Activated naive CD8-positive, alpha-beta T cell treated with anti-CD3 and anti-CD28 coated beads, Interleukin-2, amount 10 ng/mL, durations not matched to agents 7 days and 5 days (primary cell): ENCODE measurements at regions of chr4 and their contacts with region 1.

Region 1: DNA sequence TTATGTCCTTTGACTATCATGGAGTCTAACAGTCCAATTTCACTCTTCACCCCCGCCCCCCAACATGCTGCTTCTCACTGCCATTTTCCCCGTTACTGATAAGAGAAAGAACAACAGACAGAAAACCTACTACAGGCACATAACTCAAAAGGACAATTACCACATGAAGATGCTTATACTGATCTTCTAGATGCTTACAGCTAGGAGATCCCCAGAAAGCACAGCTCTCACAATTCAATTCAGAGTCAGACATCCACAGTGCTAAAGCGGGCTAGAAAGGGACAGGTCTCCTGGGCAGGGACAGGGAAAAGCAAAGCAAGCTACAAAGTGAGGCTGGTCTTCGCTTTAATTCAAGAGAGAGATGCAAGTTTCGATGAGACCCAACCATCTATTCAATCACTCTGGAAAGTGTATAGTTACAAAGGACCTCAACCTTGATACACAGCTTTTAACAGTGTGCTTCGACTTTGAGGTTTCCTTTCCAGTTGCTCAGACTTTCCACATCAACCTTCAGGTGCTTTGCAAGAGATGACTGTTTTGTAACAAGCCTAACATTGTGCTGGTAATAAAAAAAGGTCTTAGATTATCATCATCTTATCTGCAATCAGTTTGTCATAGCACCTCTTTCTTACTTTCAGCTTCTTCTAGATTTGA is 60.9 kb downstream of the LEF1 start:
- DNase-seq: no peak
- ATAC-seq: peak; percentile 76
- H3K4me3 Mint-ChIP-seq: peak overlapping the region; percentile 91
- H3K27ac Mint-ChIP-seq: peak overlapping the region; percentile 96
- H3K4me1 Mint-ChIP-seq: peaks cover 82% of the 10 kb centered on the region
- H3K27me3 Mint-ChIP-seq: no peaks in the 10 kb centered on the region

Region 2: GRCh38 chr4:108030332-108030731 is 77.5 kb before region 1 on chr4:
- POLR2A ChIA-PET with region 1: interaction called, 15 read pairs
- DNase-seq: peak; percentile 63
- ATAC-seq: peak; percentile 79
- H3K4me3 Mint-ChIP-seq: peak overlapping the region; percentile 87
- H3K27ac Mint-ChIP-seq: peak overlapping the region; percentile 91
- H3K4me1 Mint-ChIP-seq: peaks cover 56% of the 10 kb centered on the region
- H3K27me3 Mint-ChIP-seq: no peaks in the 10 kb centered on the region

Region 3: GRCh38 chr4:108060164-108060563 is 47.7 kb before region 1 on chr4:
- POLR2A ChIA-PET with region 1: no interaction called
- DNase-seq: no peak
- ATAC-seq: no peak
- H3K4me3 Mint-ChIP-seq: no peak overlapping the region
- H3K27ac Mint-ChIP-seq: no peak overlapping the region
- H3K4me1 Mint-ChIP-seq: peaks cover 36% of the 10 kb centered on the region
- H3K27me3 Mint-ChIP-seq: no peaks in the 10 kb centered on the region

Region 4: GRCh38 chr4:108118490-108118889 is 10.6 kb after region 1 on chr4:
- POLR2A ChIA-PET with region 1: interaction called, 24 read pairs
- DNase-seq: no peak
- ATAC-seq: peak; percentile 18
- H3K4me3 Mint-ChIP-seq: peak overlapping the region; percentile 78
- H3K27ac Mint-ChIP-seq: peak overlapping the region; percentile 85
- H3K4me1 Mint-ChIP-seq: peaks cover 81% of the 10 kb centered on the region
- H3K27me3 Mint-ChIP-seq: no peaks in the 10 kb centered on the region

Region 5: DNA sequence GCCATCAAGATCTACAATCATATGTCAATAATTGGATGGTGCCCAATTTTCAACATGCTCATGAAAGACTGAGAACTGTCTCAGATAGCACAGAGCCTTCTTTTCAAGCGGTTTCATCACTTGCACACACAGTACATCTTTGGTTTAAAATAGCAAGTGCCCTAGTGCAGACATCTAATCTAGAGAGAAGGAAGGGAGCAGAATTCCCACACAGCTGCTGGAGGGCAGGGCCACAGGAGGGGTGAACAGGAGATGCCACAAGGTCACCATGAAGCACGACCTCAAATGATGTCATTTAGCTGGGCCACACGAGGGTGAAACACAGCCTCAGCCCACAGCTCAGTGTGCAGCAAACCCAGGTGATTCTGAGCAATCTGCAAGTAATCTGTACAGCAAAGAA is 36.6 kb after region 1 on chr4:
- POLR2A ChIA-PET with region 1: interaction called, 16 read pairs
- DNase-seq: peak; percentile 58
- ATAC-seq: peak; percentile 51
- H3K4me3 Mint-ChIP-seq: peak overlapping the region; percentile 76
- H3K27ac Mint-ChIP-seq: peak overlapping the region; percentile 78
- H3K4me1 Mint-ChIP-seq: peaks cover 77% of the 10 kb centered on the region
- H3K27me3 Mint-ChIP-seq: no peaks in the 10 kb centered on the region

Region 6: GRCh38 chr4:108166441-108167315 is 58.8 kb after region 1 on chr4:
- POLR2A ChIA-PET with region 1: interaction called, 73 read pairs
- DNase-seq: peak; percentile 80
- ATAC-seq: peak; percentile 49
- H3K4me3 Mint-ChIP-seq: peak overlapping the region; percentile 98
- H3K27ac Mint-ChIP-seq: peak overlapping the region; percentile 96
- H3K4me1 Mint-ChIP-seq: peaks cover 30% of the 10 kb centered on the region
- H3K27me3 Mint-ChIP-seq: peaks cover 5% of the 10 kb centered on the region

Region 7: GRCh38 chr4:108650212-108651013 is 542.6 kb after region 1 on chr4 and contains the start of gene OSTC:
- POLR2A ChIA-PET with region 1: no interaction called
- DNase-seq: peak; percentile 93
- ATAC-seq: peak; percentile 91
- H3K4me3 Mint-ChIP-seq: peak within 1 kb of the TSS; percentile 87
- H3K27ac Mint-ChIP-seq: peak within 1 kb of the TSS; percentile 78
- H3K4me1 Mint-ChIP-seq: peaks cover 18% of the 10 kb centered on the region
- H3K27me3 Mint-ChIP-seq: no peaks in the 10 kb centered on the region
- total RNA-seq, gene OSTC: 55.0 to 58.4 TPM